MCF 10A (cell line): ENCODE measurements at regions of chr18 and their contacts with region 1.

Region 1: GRCh38 chr18:23883277-23883790 is 131.2 kb upstream of the TTC39C start:
- DNase-seq: peak; percentile 80
- H3K4me3 Mint-ChIP-seq: peak overlapping the region; percentile 34
- H3K27ac Mint-ChIP-seq: peak overlapping the region; percentile 86
- H3K4me1 Mint-ChIP-seq: peaks cover 60% of the 10 kb centered on the region
- H3K27me3 Mint-ChIP-seq: no peaks in the 10 kb centered on the region
- CTCF ChIP-seq: no peak

Region 2: GRCh38 chr18:23893653-23894052 is 10.3 kb after region 1 on chr18:
- CTCF ChIA-PET with region 1: no interaction called
- POLR2A ChIA-PET with region 1: interaction called, 23 read pairs
- intact Hi-C with region 1: no loop called
- DNase-seq: no peak
- H3K4me3 Mint-ChIP-seq: no peak overlapping the region
- H3K27ac Mint-ChIP-seq: no peak overlapping the region
- H3K4me1 Mint-ChIP-seq: peaks cover 29% of the 10 kb centered on the region
- H3K27me3 Mint-ChIP-seq: no peaks in the 10 kb centered on the region
- CTCF ChIP-seq: no peak